Activated CD8-positive, alpha-beta T cell treated with anti-CD3 and anti-CD28 coated beads for 36 hours (primary cell): ENCODE measurements at regions of chrX and their contacts with region 1.

Region 1: GRCh38 chrX:107537815-107538214 is 88.4 kb downstream of the FRMPD3 start:
- DNase-seq: peak; percentile 62
- ATAC-seq: peak; percentile 76
- H3K4me3 Mint-ChIP-seq: no peak overlapping the region
- H3K27ac Mint-ChIP-seq: no peak overlapping the region
- H3K4me1 Mint-ChIP-seq: no peaks in the 10 kb centered on the region
- H3K27me3 Mint-ChIP-seq: peaks cover 4% of the 10 kb centered on the region
- CTCF ChIP-seq: peak; percentile 31

Region 2: DNA sequence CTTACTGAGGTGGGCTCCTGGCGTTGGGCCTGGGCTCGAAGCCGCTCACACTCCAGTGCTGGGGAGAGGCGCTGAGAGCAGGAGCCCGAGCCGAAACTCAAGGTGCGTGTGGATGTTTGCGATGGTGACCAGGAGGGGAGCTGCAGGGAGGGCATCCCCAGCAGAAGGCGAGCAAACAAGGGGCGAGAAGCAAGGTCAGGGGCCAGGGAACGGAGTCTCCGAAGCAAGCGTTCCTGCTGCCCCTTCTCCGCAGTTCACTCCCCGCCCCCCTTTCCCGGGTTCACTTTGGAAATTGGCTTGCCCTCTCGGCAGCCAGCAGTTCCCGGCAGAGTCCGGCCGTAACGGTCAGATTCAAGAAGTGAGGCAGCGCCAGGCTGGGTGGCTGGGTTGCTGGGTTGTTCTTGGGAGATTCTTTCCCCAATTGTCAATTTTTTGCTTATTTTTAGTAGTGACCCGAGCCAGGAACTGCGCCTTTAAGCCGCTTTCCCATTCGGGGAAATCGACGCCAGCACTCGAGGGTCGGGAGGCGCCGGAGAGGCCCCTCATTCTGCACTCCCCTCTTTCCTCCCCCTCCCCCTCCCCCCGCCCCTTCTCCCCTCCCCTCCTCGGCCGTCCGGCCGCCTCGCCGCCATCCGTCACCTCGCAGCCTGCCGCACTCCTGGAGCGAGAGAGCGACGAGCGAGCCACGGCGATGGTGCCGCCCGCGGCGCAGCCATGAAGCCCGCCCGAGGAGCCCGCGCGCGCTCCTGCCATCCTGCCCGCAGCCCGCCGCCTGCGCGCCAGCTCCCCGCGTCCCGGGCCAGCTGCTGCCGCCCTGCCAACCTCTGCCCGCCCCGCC is 88.6 kb before region 1 on chrX and contains the start of gene FRMPD3:
- CTCF ChIA-PET with region 1: no interaction called
- POLR2A ChIA-PET with region 1: no interaction called
- intact Hi-C with region 1: no loop called
- DNase-seq: no peak
- ATAC-seq: no peak
- H3K4me3 Mint-ChIP-seq: peak within 1 kb of the TSS; percentile 51
- H3K27ac Mint-ChIP-seq: no peak within 1 kb of the TSS
- H3K4me1 Mint-ChIP-seq: peaks cover 16% of the 10 kb centered on the region
- H3K27me3 Mint-ChIP-seq: peaks cover 41% of the 10 kb centered on the region
- CTCF ChIP-seq: no peak
- total RNA-seq, gene FRMPD3: not detected

Region 3: GRCh38 chrX:107627838-107628661 is 90.2 kb after region 1 on chrX and contains the start of gene PRPS1:
- CTCF ChIA-PET with region 1: interaction called, 9 read pairs
- POLR2A ChIA-PET with region 1: no interaction called
- intact Hi-C with region 1: loop called (anchors 10 kb)
- DNase-seq: peak; percentile 94
- ATAC-seq: peak; percentile 99
- H3K4me3 Mint-ChIP-seq: peak within 1 kb of the TSS; percentile 86
- H3K27ac Mint-ChIP-seq: peak within 1 kb of the TSS; percentile 95
- H3K4me1 Mint-ChIP-seq: peaks cover 23% of the 10 kb centered on the region
- H3K27me3 Mint-ChIP-seq: no peaks in the 10 kb centered on the region
- CTCF ChIP-seq: no peak
- total RNA-seq, gene PRPS1: 122 to 131 TPM